Psoas muscle (tissue), 8 donors: ENCODE measurements at regions of chr11 and their contacts with region 1.

Region 1: DNA sequence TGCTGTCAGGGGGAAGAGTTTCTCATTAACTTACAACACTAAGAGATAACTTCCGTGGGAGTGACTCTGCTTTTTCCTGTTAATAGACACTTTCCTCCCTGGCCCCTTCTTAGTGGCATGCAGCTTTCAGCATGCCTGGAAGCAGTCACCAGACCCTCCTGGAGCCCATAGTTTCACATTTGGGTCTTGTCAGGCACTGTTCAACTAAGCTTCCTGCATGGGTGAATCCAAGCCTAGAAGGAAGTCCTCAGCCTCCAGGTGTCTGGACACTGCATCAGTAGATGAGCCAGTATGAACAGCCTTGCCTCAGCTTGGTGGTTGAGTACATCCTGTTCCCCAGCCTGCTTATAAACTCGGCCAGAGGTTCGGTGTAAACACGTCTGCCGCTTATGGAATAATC is 68.1 kb downstream of the PPP6R3 start:
- DNase-seq: no peak
- ATAC-seq: peak; percentile 55 to 87 (median 78)
- H3K4me3 ChIP-seq: no peak overlapping the region
- H3K27ac ChIP-seq: peak overlapping the region; percentile 84
- H3K4me1 ChIP-seq: peaks cover 90% of the 10 kb centered on the region
- H3K27me3 ChIP-seq: no peaks in the 10 kb centered on the region
- CTCF ChIP-seq: no peak

Region 2: DNA sequence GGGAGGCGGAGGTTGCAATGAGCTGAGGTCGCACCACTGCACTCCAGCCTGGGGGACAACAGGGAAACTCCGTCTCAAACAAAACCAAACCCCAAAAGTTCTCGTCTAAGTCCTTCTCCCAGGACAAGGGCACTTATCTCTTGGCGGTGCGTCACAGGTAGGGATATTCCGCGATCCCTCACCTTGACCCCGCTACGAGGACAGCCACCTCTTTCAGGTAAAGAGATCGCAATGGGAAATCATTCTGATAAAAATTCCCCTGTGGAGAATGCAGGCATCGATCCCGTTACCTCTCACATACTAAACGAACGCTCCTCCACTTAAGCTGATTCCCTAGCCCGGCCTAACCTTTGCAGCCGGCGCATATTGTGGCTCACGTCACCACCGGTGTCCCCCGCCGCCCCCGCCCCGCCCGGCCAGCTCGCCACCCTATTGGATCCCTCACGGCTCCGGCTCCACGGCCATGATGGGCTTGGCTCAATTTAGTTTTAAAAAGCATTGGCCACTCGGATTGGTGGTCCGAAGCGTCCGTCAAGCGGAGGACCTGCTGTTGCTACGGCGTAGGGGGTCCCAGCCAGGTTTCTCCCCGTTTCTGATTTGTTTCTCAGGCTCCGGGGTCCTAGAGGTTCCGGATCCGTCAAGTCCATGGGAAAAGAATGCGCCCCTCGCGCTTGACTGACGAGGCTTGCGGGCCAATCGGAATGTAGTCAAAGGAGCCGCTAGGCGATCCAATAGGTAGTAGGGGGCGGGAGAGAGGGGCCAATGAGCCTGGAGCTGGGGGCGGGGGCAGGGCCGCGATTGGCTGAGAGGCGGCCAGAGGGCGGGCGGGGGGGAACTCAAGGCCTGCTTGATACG is 68.5 kb before region 1 on chr11:
- intact Hi-C with region 1: loop called (anchors 10 kb)
- DNase-seq: peak; percentile 96 to 97
- ATAC-seq: peak; percentile 90 to 92 (median 92)
- H3K4me3 ChIP-seq: peak overlapping the region; percentile 94
- H3K27ac ChIP-seq: peak overlapping the region; percentile 99
- H3K4me1 ChIP-seq: peaks cover 32% of the 10 kb centered on the region
- H3K27me3 ChIP-seq: no peaks in the 10 kb centered on the region
- CTCF ChIP-seq: no peak

Region 3: DNA sequence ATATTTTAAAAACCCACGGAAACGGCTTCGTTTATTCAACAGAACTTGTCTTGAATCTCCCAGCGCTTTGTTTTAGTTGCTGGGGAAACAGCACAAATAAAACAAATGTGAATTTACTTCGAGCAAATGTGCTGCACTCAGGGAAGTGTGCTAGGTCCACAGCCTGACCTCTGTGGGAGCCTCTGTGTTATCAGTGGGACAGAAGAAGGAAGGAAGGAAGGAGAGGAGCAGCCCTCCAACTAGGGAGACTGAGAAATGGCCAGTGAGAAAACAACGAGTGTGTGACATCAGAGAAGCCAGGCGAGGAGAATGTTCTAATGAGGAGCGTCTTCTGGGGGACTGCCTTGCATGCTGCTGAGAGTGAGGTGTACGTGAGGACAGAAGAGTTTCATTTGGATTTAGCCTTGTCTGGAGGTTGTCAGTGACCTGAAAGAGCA is 25.4 kb before region 1 on chr11:
- intact Hi-C with region 1: loop called in 1 of 2 experiments (anchors 5 kb)
- DNase-seq: no peak
- ATAC-seq: peak in 3 of 4 donors; percentile 11 to 23 (median 23)
- H3K4me3 ChIP-seq: no peak overlapping the region
- H3K27ac ChIP-seq: peak overlapping the region; percentile 60
- H3K4me1 ChIP-seq: peaks cover 98% of the 10 kb centered on the region
- H3K27me3 ChIP-seq: no peaks in the 10 kb centered on the region
- CTCF ChIP-seq: no peak

Region 4: DNA sequence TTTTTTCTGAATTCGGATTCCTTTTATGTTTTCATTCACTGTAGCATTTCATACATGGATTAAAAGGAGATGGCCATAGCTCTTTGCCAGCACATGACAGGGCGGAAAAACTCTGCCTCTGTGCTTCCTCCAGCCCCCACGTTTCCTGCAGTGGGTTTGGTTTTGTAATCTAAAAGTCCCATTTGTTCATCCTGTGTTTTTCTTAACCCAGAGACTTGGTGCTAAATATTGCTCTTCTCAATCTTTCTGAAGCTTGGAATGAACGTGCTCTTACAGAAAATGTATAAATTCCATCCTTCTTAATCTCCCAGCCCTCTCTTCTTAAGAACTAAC is 21.8 kb after region 1 on chr11:
- intact Hi-C with region 1: loop called in 1 of 2 experiments (anchors 1 kb)
- DNase-seq: no peak
- ATAC-seq: no peak
- H3K4me3 ChIP-seq: no peak overlapping the region
- H3K27ac ChIP-seq: peak overlapping the region; percentile 58
- H3K4me1 ChIP-seq: peaks cover 47% of the 10 kb centered on the region
- H3K27me3 ChIP-seq: no peaks in the 10 kb centered on the region
- CTCF ChIP-seq: no peak

Region 5: DNA sequence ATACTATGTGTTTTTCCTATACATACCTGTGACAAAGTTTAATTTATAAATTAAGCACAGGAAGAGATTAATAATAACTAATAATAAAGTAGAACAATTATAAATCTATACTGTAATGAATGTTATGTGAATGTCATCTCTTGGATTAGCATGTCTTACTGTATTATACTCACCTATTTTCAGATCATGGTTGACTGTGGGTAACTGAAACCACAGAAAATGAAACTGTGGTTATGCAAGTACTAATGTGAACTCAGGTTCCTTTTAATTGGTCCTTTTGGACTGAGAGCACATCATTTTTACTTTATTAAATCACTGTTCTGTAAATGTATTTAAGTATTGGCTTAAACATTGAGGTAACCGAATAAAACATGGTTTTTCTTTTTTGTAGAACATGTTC is 40.7 kb after region 1 on chr11:
- intact Hi-C with region 1: loop called in 1 of 2 experiments (anchors 5 kb)
- DNase-seq: no peak
- ATAC-seq: peak in 1 of 4 donors; percentile 46
- H3K4me3 ChIP-seq: no peak overlapping the region
- H3K27ac ChIP-seq: peak overlapping the region; percentile 23
- H3K4me1 ChIP-seq: peaks cover 49% of the 10 kb centered on the region
- H3K27me3 ChIP-seq: no peaks in the 10 kb centered on the region
- CTCF ChIP-seq: no peak